GM12878 (cell line): ENCODE measurements at regions of chr3 and their contacts with region 1.

Region 1: DNA sequence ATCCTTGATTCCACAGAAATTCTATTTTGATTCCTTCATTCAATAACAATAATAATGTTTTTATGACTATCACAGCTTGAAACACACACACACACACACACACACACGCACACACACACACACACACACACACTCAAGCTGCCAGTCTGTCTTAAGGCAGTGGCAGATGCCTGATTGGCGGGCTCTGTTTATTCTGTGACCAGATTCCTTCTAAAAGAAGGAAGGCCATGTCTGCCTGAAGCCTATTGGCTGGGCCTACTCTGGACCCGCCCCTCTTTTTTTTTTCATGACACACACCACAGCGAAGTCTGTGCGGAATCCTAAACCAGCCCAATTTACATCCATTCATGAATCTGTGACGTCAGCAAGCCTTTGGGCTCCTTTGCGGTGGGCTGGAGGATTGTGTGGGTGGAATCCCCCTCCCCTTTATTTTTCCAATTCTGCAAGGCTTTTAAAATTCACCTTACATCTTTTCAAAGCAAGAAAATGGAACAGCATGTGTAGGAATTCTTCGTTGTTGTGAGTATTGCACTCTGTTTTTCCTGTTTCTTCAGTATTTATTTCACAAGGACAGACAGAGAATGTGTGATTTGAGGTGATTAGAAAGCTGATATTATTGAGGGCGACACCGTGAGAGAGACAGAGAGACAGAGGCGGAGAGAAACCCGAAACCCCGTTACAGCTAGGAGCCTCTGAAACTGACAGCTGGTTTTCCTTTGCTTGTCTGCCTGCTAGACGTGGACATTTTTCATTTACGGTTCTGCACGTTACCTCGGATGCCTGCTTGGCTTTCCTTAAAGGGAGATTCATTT is at the start of gene MAP3K13:
- DNase-seq: peak; percentile 81
- ATAC-seq: peak; percentile 99
- H3K4me3 ChIP-seq: peak within 1 kb of the TSS; percentile 69
- H3K27ac ChIP-seq: peak within 1 kb of the TSS; percentile 66
- H3K4me1 ChIP-seq: peaks cover 8% of the 10 kb centered on the region; the same call in 1 of the 2 replicates
- H3K27me3 ChIP-seq: no peaks in the 10 kb centered on the region
- CTCF ChIP-seq: no peak
- EP300 ChIP-seq: no peak
- POLR2A ChIP-seq: peak; percentile 54; the same call in 1 of the 2 replicates
- RAD21 ChIP-seq: no peak
- polyA plus RNA-seq, gene MAP3K13: 46.6 to 70.8 TPM

Region 2: DNA sequence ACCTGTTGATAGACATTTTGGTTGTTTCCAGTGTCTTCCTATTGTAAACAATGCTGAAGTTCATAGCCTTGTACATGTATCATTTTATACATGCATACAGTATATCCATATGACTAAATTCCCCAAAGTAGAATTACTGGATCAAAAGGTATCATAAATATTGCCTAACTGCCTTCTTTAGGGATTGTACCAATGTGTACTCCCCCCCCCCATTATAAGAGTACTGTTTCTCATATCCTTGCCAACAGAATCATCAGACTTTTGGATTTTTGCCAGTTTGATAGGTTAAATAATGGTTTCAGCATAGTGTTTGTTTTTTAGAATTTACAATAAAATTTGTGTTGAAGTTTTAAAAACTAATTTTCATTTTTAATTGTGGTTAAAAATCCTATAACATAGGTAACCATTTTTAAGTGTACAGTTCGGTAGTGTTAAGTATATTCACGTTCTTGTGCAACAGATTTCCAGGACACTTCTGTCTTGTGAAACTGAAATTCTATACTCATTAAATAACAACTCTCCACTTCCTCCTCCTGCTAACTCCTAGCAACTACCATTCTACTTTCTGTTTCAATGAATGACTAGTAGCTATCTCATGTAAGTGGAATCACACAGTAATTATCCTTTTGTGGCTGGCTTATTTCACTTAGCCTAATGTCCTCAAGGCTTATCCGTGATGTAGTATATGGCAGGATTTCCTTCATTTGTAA is 30.9 kb before region 1 on chr3:
- CTCF ChIA-PET with region 1: interaction called, 11 read pairs
- POLR2A ChIA-PET with region 1: interaction called, 5 read pairs
- RAD21 ChIA-PET with region 1: no interaction called
- SMC1A ChIA-PET with region 1: no interaction called
- in situ Hi-C with region 1: no loop called
- intact Hi-C with region 1: no loop called
- DNase-seq: peak; percentile 52
- ATAC-seq: peak; percentile 99
- H3K4me3 ChIP-seq: no peak overlapping the region
- H3K27ac ChIP-seq: no peak overlapping the region; the same call in 1 of the 2 replicates
- H3K4me1 ChIP-seq: peaks cover 10% of the 10 kb centered on the region
- H3K27me3 ChIP-seq: no peaks in the 10 kb centered on the region
- CTCF ChIP-seq: no peak
- EP300 ChIP-seq: 0 out of 4 replicates have a peak, but pooled peaks of 1 of the 2 experiments have one; percentile 14
- POLR2A ChIP-seq: no peak
- RAD21 ChIP-seq: no peak

Region 3: DNA sequence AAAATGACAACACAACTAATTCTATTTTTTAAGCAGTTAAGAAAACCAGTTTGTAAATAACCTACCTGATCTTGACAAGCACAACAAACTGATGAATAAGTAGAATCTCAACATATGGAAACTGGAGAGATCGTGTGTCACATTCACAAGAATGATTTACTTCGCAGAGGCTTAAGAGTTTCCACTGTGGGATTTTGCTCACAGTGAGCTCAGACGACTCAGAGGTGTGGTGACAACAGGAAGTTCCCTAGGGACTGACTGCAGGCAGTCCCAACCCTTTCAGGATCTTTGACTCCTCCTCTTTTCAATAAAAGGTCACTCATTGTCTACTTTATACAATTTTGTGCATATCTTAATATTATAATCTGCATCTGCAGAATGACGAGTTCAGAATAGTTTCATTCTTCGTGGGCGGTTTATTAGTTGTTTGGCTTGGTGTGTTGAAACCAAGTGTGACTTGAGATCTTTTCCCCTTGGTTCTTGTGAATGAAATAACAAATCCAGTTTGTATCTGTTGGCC is 189.4 kb after region 1 on chr3 and contains the start of gene LIPH:
- CTCF ChIA-PET with region 1: interaction called, 5 read pairs
- POLR2A ChIA-PET with region 1: no interaction called
- RAD21 ChIA-PET with region 1: no interaction called
- SMC1A ChIA-PET with region 1: interaction called, 3 read pairs
- in situ Hi-C with region 1: no loop called
- intact Hi-C with region 1: loop called (anchors 5 kb)
- DNase-seq: peak; percentile 61
- ATAC-seq: peak; percentile 81
- H3K4me3 ChIP-seq: peak within 1 kb of the TSS; percentile 65
- H3K27ac ChIP-seq: peak within 1 kb of the TSS; percentile 68
- H3K4me1 ChIP-seq: peaks cover 17% of the 10 kb centered on the region
- H3K27me3 ChIP-seq: no peaks in the 10 kb centered on the region
- CTCF ChIP-seq: no peak
- EP300 ChIP-seq: peak in 1 of 2 experiments; percentile 37; a peak in 1 of 4 replicates
- POLR2A ChIP-seq: no peak
- RAD21 ChIP-seq: no peak
- polyA plus RNA-seq, gene LIPH: 2.2 to 4.7 TPM